Panc1 (cell line): ENCODE measurements at regions of chr15 and their contacts with region 1.

Region 1: DNA sequence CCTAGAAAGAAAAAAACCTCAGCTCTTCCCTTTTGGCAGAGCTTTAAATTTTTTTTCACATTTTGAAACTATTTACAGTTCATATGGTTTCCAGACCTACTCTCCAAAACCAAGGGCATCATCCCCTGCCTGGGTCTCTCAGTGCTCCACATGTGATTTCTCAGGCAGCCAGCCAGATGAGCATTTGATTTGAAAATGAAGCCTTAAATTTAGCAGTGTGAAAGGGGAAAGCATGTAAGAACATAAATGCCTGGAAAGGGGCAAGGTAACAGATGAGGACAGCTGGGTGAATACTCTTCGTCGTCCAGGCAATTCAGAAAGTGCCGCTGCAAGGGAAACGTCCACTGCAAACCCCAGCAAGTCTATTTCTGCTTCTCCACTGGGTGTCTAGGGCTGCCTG is 94.8 kb downstream of the ATP8B4 start:
- DNase-seq: no peak
- ATAC-seq: no peak
- H3K4me3 ChIP-seq: no peak overlapping the region
- H3K27ac ChIP-seq: no peak overlapping the region
- H3K4me1 ChIP-seq: no peaks in the 10 kb centered on the region
- H3K27me3 ChIP-seq: no peaks in the 10 kb centered on the region; the same call in 1 of the 2 replicates
- CTCF ChIP-seq: no peak

Region 2: GRCh38 chr15:50066192-50066591 is 41.9 kb after region 1 on chr15:
- CTCF ChIA-PET with region 1: no interaction called
- POLR2A ChIA-PET with region 1: no interaction called
- in situ Hi-C with region 1: no loop called
- intact Hi-C with region 1: no loop called
- DNase-seq: no peak
- ATAC-seq: no peak
- H3K4me3 ChIP-seq: no peak overlapping the region
- H3K27ac ChIP-seq: no peak overlapping the region
- H3K4me1 ChIP-seq: no peaks in the 10 kb centered on the region
- H3K27me3 ChIP-seq: no peaks in the 10 kb centered on the region
- CTCF ChIP-seq: no peak

Region 3: DNA sequence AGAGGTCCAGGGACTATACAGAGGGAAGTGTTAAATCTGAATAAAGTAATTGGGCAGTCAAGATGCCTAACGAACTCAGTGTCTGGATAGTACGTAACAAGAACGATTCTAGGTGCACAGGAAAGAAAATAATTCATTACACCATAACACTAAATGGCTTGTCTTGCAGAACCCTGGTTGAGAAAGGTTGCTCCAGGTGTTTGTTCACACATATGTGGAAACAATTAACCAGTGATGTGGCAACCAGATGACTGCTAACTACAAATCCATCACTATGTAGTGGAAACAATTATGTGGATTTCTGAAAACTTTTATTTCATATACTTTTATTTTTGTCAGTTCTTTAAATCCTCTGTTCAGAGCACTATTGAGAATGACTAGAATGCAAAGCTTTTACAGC is 251.6 kb after region 1 on chr15:
- CTCF ChIA-PET with region 1: no interaction called
- POLR2A ChIA-PET with region 1: interaction called, 11 read pairs
- in situ Hi-C with region 1: no loop called
- intact Hi-C with region 1: no loop called
- DNase-seq: no peak
- ATAC-seq: no peak
- H3K4me3 ChIP-seq: no peak overlapping the region
- H3K27ac ChIP-seq: no peak overlapping the region
- H3K4me1 ChIP-seq: no peaks in the 10 kb centered on the region
- H3K27me3 ChIP-seq: no peaks in the 10 kb centered on the region
- CTCF ChIP-seq: no peak